GM10248 (cell line): ENCODE measurements at regions of chr2 and their contacts with region 1.

Region 1: DNA sequence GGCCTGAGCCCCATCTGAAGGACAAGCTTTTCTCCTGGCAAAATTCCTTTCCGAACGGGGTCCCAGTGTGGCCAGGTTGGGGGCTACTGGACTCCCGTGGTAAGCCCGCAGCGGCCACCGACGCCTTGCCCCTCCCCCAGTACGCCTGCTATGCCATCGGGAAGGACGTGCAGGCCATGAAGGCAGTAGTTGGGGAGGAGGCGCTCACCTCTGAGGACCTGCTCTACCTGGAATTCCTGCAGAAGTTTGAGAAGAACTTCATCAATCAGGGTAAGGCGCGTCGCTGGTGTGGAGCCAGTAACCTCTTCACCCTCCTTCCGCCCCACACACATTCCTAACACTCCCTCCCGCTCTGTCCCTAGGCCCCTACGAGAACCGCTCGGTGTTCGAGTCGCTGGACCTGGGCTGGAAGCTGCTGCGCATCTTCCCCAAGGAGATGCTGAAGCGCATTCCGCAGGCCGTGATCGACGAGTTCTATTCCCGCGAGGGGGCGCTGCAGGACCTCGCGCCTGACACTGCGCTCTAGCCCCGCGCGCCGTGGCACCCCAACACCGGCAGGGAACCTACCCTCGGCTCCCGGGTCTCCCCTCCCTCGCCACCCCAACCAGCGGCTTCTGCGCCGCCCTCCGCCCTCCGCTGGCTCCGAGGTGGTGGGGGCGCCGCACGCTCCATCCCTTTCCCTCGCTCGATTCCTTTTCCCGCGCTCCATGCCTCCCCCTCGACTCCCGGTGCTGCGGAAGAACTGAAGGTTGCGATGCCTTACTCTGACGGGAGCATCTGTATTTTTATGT is 13.6 kb upstream of the ANKRD53 start:
- DNase-seq: peak; percentile 89
- CTCF ChIP-seq: peak; percentile 97

Region 2: GRCh38 chr2:71000780-71001591 is 36.2 kb after region 1 on chr2:
- CTCF ChIA-PET with region 1: interaction called, 28 read pairs
- POLR2A ChIA-PET with region 1: no interaction called
- DNase-seq: peak; percentile 87
- CTCF ChIP-seq: peak; percentile 94